ENCODE measurements at regions of chr11 and their contacts with region 1.

Region 1: DNA sequence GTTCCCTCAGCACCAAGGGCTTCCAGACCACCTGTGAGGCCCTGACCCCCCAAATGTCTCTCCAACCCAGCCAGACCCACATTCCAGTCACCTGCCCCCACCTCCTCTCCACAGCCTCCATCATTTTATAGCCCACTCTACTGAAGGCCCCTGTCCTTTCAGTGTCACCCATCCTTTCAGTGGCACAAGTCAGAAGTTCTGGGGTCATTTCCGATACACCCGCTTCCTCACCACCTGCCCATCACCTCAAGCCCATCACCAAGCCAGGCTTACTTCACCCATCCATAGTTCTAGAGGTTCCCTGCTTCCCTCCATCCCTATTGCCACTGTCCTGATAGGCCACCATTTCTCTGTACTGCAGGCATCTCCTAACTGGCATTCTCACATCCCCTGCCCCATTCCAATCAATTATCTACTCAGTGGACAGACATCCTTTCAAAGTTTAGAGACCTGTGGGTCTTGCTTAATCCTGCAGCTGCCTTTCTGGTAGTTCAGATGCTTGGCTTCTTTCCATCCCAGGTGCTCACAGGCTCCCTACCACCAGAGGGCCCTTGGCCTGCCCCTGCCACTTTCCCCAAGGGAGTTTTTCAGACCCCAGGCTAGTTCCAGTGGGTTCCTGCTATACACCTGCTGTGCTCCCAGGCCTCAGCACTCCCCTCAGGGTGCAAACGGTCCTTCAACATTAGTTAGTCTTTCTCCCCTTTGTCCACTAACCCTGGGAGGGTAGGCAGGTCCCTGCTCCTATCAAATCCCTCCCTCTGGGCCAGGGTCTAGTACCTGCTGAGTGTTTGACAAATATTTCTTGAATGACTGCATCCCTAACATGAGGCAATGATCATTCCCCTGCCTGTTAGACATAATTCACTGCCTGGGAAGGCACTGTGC is 7.6 kb downstream of the KCNQ1OT1 start:
- DNase-seq: peak; percentile 36

Region 2: GRCh38 chr11:2669634-2670469 is 22.4 kb before region 1 on chr11:
- intact Hi-C with region 1: loop called in 1 of 2 experiments (anchors 1 kb)
- DNase-seq: peak; percentile 48

Region 3: GRCh38 chr11:2730272-2731129 is 38.3 kb after region 1 on chr11:
- intact Hi-C with region 1: loop called in 1 of 2 experiments (anchors 1 kb)
- DNase-seq: no peak

Region 4: GRCh38 chr11:4672470-4672869 is 1980.2 kb after region 1 on chr11:
- intact Hi-C with region 1: no loop called
- DNase-seq: no peak